Caco-2 (cell line): ENCODE measurements at regions of chr4 and their contacts with region 1.

Region 1: DNA sequence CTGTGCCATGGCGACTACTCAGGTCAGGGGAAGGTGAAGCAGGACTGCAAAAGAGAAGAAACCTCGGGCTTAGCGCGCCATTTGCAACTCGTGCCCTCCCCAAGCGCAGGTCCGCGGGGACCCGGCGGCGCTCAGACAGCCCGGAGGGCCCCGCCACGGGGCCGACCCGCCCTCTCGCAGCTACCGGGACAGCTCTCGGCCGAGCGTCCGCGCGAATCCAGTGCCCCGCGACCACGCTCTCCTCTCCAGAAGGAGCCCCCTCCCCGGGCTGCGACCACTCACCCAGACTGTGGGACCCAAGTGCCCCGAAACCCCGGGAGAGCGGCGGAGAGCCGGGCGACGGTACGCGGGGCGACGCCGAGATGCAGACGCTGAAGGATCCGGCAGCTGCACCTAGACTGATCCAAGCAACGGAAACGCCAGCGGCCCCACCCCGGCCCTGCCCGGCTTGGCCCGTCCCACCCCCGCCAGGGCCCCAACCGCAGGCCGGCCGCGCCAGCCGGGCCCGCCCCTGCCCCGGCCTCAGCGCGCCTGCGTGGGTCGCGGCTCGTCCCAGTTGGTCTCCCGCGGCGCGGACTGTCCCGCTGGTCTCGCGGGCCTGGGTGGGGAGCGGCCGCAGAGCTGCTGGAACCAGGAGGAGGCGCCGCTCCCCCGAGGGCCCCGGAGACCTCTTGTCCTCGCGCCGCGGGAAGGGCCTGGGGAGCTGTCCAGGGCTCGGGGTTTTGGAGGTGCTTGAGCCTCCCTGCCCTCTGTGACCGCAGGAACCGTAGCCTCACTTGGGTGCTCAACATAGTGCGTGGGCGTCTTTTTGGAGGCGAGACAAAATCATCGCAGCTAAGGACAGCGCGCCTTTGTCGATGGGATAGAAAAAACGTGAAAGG is at the start of gene ANXA5:
- DNase-seq: peak; percentile 80 to 90
- H3K4me3 ChIP-seq: peak within 1 kb of the TSS; percentile 80
- H3K4me3 Mint-ChIP-seq: peak within 1 kb of the TSS; percentile 94
- H3K27ac Mint-ChIP-seq: peak within 1 kb of the TSS; percentile 96
- H3K4me1 ChIP-seq: peaks cover 26% of the 10 kb centered on the region
- H3K4me1 Mint-ChIP-seq: no peaks in the 10 kb centered on the region
- H3K27me3 ChIP-seq: no peaks in the 10 kb centered on the region
- H3K27me3 Mint-ChIP-seq: no peaks in the 10 kb centered on the region
- CTCF ChIP-seq: peak in 1 of 2 experiments; percentile 37
- total RNA-seq, gene ANXA5: 328 and 359 TPM in 2 replicates

Region 2: GRCh38 chr4:121665371-121665770 is 31.4 kb before region 1 on chr4:
- CTCF ChIA-PET with region 1: no interaction called
- POLR2A ChIA-PET with region 1: no interaction called
- intact Hi-C with region 1: no loop called
- DNase-seq: no peak
- H3K4me3 ChIP-seq: no peak overlapping the region
- H3K4me3 Mint-ChIP-seq: no peak overlapping the region
- H3K27ac Mint-ChIP-seq: no peak overlapping the region
- H3K4me1 ChIP-seq: 0 out of 2 replicates have a peak, but pooled peaks cover 3% of the 10 kb centered on the region
- H3K4me1 Mint-ChIP-seq: no peaks in the 10 kb centered on the region
- H3K27me3 ChIP-seq: no peaks in the 10 kb centered on the region
- H3K27me3 Mint-ChIP-seq: no peaks in the 10 kb centered on the region
- CTCF ChIP-seq: no peak

Region 3: GRCh38 chr4:121675715-121676114 is 21.1 kb before region 1 on chr4:
- CTCF ChIA-PET with region 1: no interaction called
- POLR2A ChIA-PET with region 1: interaction called, 6 read pairs
- intact Hi-C with region 1: loop called (anchors 1 kb)
- DNase-seq: peak in 1 of 2 experiments; percentile 26
- H3K4me3 ChIP-seq: no peak overlapping the region
- H3K4me3 Mint-ChIP-seq: no peak overlapping the region
- H3K27ac Mint-ChIP-seq: no peak overlapping the region
- H3K4me1 ChIP-seq: peaks cover 48% of the 10 kb centered on the region
- H3K4me1 Mint-ChIP-seq: peaks cover 31% of the 10 kb centered on the region
- H3K27me3 ChIP-seq: no peaks in the 10 kb centered on the region
- H3K27me3 Mint-ChIP-seq: no peaks in the 10 kb centered on the region
- CTCF ChIP-seq: peak in 1 of 2 experiments; percentile 21

Region 4: GRCh38 chr4:121711263-121712000 is 14.6 kb after region 1 on chr4:
- CTCF ChIA-PET with region 1: interaction called, 6 read pairs
- POLR2A ChIA-PET with region 1: interaction called, 6 read pairs
- intact Hi-C with region 1: loop called (anchors 1 kb)
- DNase-seq: peak; percentile 80
- H3K4me3 ChIP-seq: peak overlapping the region; percentile 23
- H3K4me3 Mint-ChIP-seq: peak overlapping the region; percentile 81
- H3K27ac Mint-ChIP-seq: peak overlapping the region; percentile 91
- H3K4me1 ChIP-seq: peaks cover 5% of the 10 kb centered on the region; the same call in 1 of the 2 replicates
- H3K4me1 Mint-ChIP-seq: peaks cover 26% of the 10 kb centered on the region
- H3K27me3 ChIP-seq: no peaks in the 10 kb centered on the region
- H3K27me3 Mint-ChIP-seq: no peaks in the 10 kb centered on the region
- CTCF ChIP-seq: no peak

Region 5: DNA sequence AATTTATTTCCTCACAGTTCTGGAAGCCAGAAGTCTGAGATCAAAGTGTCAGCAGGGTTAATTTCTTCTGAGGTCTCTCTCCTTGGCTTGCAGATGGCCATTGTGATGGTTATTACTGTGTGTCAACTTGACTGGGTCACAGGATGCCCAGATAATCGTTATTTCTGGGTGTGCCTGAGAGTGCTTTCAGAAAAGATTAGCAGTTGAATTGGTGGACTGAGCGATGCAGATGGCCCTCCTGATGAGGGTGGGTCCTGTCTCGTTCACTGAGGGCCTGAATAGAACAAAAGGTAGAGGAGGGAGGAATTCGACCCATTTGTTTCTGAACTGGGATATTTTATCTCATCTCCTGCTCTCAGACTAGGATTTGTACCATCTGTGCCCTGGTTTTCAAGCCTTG is 52.4 kb after region 1 on chr4:
- CTCF ChIA-PET with region 1: no interaction called
- POLR2A ChIA-PET with region 1: no interaction called
- intact Hi-C with region 1: no loop called
- DNase-seq: no peak
- H3K4me3 ChIP-seq: no peak overlapping the region
- H3K4me3 Mint-ChIP-seq: no peak overlapping the region
- H3K27ac Mint-ChIP-seq: no peak overlapping the region
- H3K4me1 ChIP-seq: no peaks in the 10 kb centered on the region
- H3K4me1 Mint-ChIP-seq: no peaks in the 10 kb centered on the region
- H3K27me3 ChIP-seq: no peaks in the 10 kb centered on the region
- H3K27me3 Mint-ChIP-seq: peaks cover 4% of the 10 kb centered on the region
- CTCF ChIP-seq: no peak

Region 6: DNA sequence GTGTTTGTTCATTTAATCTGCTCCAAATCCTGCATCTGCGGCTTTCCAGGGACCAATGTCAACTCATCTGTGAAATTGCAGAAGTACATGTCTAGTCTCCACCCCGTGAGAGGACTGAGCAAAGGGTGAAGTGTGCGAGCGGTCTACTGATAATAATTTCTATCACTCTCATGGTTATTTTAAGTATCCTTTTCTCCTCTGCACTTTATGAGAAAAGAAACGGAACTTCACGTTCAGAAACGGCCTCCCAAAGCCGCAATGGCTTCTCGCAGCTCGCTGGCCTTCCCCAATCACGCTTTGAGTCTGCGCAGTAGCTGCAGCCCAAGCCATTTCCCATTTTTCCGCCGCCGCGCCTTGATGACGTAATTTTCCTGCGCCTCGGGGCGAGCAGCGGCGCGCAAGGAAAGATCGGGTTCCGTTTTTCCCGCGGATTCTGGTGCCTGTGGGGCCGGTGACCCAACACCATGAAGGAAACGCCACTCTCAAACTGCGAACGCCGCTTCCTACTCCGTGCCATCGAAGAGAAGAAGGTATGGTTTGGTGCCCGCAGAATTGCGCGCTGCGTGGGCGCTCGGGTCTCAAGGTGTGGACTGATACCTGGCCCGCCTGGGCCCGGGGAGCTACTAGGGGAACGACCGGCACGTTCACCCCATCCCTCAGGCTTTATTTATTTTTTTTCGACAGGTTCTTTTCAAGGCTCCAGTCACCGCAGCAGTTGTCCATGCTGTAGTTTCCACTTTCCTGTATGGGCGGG is 104.3 kb after region 1 on chr4 and contains the start of gene EXOSC9:
- CTCF ChIA-PET with region 1: no interaction called
- POLR2A ChIA-PET with region 1: no interaction called
- intact Hi-C with region 1: loop called (anchors 5 kb)
- DNase-seq: peak; percentile 93 to 95
- H3K4me3 ChIP-seq: peak within 1 kb of the TSS; percentile 92
- H3K4me3 Mint-ChIP-seq: peak within 1 kb of the TSS; percentile 91
- H3K27ac Mint-ChIP-seq: peak within 1 kb of the TSS; percentile 94
- H3K4me1 ChIP-seq: 0 out of 2 replicates have a peak, but pooled peaks cover 7% of the 10 kb centered on the region
- H3K4me1 Mint-ChIP-seq: peaks cover 7% of the 10 kb centered on the region
- H3K27me3 ChIP-seq: no peaks in the 10 kb centered on the region
- H3K27me3 Mint-ChIP-seq: no peaks in the 10 kb centered on the region
- CTCF ChIP-seq: no peak
- total RNA-seq, gene EXOSC9: 32.5 and 32.6 TPM in 2 replicates